Natural killer cell (primary cell): ENCODE measurements at regions of chr2 and their contacts with region 1.

Region 1: DNA sequence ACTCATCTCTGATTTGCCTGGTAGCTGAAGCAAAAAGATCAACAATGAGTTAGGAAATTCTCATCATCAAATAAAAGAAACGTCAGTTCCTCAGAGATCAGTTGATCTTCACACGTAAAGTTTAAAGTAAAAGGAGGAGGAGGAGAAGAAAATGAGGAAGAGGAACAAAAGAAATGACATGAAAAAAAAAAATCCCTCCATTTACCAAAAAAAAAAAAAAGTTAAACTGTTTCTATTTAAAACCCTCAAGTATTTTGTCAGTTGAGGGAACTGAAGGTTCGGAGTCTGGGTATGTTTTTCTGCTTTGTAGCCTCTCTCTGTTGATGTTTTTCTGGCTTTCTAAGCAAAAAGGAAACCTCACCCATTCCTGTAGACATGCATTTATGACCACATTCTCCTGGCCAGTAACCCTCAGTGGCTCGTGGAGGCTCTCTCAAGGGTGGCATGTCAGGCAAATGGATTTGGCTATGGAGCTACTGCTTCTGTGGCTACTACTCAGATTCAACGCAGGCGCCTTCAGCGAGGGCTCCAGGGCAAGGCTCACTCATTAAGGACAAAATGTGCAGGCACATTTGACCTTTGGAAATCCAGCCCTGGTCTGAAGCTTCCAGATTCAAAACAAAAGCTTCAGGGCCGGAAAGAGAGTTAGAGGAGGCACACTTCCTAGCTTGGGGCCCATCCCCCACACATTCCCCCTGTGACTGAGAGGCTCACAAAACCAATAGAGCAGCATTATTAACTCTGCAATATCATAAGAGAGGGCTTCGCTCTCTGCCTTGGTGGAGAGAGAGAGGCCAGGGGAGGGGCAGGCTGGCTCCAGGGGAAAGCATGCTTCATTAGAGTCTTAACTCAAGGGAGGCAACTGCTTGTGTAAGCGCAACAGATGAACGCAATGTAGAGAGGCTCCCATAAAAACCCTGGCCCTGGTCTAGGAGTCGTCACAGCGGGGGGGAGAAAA is 22.3 kb downstream of the KLF7 start:
- DNase-seq: peak in 1 of 2 donors; percentile 76
- ATAC-seq: peak; percentile 63 to 64 (median 63)
- H3K4me3 ChIP-seq: peak overlapping the region; percentile 37
- H3K4me3 Mint-ChIP-seq: peak overlapping the region; percentile 89
- H3K27ac ChIP-seq: peak overlapping the region; percentile 95
- H3K27ac Mint-ChIP-seq: peak overlapping the region; percentile 87 to 88
- H3K4me1 ChIP-seq: peaks cover 25% of the 10 kb centered on the region
- H3K4me1 Mint-ChIP-seq: peaks cover 38 to 43% of the 10 kb centered on the region in 2 donors
- H3K27me3 ChIP-seq: no peaks in the 10 kb centered on the region
- H3K27me3 Mint-ChIP-seq: no peaks in the 10 kb centered on the region
- CTCF ChIP-seq: no peak

Region 2: GRCh38 chr2:207083361-207084110 is 60.0 kb before region 1 on chr2:
- intact Hi-C with region 1: no loop called
- DNase-seq: no peak
- ATAC-seq: no peak
- H3K4me3 ChIP-seq: no peak overlapping the region
- H3K4me3 Mint-ChIP-seq: no peak overlapping the region
- H3K27ac ChIP-seq: no peak overlapping the region
- H3K27ac Mint-ChIP-seq: no peak overlapping the region
- H3K4me1 ChIP-seq: no peaks in the 10 kb centered on the region
- H3K4me1 Mint-ChIP-seq: peaks cover 0 to 5% of the 10 kb centered on the region in 2 donors
- H3K27me3 ChIP-seq: no peaks in the 10 kb centered on the region
- H3K27me3 Mint-ChIP-seq: no peaks in the 10 kb centered on the region
- CTCF ChIP-seq: no peak

Region 3: DNA sequence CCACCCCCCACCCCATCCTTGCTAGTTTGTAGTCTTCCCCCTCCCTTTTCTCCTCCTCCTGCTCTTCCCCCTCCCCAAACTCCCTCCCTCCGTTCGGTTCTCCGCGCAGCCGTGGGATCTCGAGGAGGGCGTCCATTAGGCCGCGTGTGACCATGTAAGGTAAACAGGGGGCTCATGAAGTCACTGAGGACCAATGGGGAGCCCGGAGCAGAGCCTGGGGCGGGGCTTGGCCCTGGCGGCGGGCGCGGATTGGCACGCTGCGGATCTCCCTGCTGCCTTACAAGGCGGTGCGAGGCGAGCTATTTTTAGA is 22.5 kb after region 1 on chr2:
- intact Hi-C with region 1: loop called (anchors 2 kb)
- DNase-seq: peak; percentile 92 to 96
- ATAC-seq: peak; percentile 88 to 97 (median 94)
- H3K4me3 ChIP-seq: peak overlapping the region; percentile 74
- H3K4me3 Mint-ChIP-seq: peak overlapping the region; percentile 99
- H3K27ac ChIP-seq: peak overlapping the region; percentile 95
- H3K27ac Mint-ChIP-seq: peak overlapping the region; percentile 92 to 99
- H3K4me1 ChIP-seq: peaks cover 18% of the 10 kb centered on the region
- H3K4me1 Mint-ChIP-seq: peaks cover 45 to 56% of the 10 kb centered on the region in 2 donors
- H3K27me3 ChIP-seq: no peaks in the 10 kb centered on the region
- H3K27me3 Mint-ChIP-seq: peaks cover 0 to 25% of the 10 kb centered on the region in 2 donors
- CTCF ChIP-seq: no peak